ENCODE measurements at regions of chr12 and their contacts with region 1.

Region 1: DNA sequence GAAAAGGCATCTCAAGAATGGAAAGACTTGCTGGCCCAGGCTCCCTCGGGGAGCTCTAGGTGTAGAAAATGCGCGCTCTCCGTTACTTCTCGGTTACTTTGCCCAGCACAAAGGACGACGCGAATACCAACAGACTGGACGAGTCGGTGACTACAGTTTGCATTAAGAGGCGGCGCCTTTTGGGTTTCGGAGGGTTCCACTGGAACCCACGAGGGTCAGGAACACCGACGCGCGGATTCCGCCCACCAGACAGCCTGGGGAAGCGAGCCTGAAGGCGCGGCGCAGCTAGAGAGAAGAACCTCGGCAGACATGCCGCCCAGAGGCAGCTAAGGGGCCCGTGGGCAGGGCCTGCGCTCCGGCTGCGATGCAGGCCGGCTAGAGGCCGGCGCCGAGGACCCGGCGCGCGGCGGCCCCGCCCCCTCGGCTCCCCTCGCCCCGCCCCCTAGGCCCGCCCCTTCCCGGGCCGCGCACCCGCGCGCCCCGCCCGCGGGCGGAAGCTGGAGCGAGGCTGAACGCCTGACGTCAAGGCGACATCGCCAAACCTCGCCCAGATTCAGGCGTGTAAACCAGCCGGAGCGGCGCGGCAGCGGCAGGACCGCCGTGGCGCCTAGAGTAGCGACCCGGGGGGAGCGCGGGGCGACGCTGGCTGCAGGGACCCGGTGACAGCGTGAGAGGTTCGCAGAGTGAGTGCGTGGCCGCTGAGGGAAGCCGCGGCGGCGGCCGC is at the start of gene RAP1B:
- DNase-seq: peak; percentile 87
- H3K4me3 ChIP-seq: peak within 1 kb of the TSS; percentile 90 to 97 (median 96)
- H3K27ac ChIP-seq: peak within 1 kb of the TSS; percentile 90
- H3K4me1 ChIP-seq: peaks cover 35% of the 10 kb centered on the region
- H3K27me3 ChIP-seq: no peaks in the 10 kb centered on the region
- CTCF ChIP-seq: no peak
- POLR2A ChIP-seq: peak; percentile 95
- total RNA-seq, gene RAP1B: 174 and 186 TPM in 2 replicates

Region 2: DNA sequence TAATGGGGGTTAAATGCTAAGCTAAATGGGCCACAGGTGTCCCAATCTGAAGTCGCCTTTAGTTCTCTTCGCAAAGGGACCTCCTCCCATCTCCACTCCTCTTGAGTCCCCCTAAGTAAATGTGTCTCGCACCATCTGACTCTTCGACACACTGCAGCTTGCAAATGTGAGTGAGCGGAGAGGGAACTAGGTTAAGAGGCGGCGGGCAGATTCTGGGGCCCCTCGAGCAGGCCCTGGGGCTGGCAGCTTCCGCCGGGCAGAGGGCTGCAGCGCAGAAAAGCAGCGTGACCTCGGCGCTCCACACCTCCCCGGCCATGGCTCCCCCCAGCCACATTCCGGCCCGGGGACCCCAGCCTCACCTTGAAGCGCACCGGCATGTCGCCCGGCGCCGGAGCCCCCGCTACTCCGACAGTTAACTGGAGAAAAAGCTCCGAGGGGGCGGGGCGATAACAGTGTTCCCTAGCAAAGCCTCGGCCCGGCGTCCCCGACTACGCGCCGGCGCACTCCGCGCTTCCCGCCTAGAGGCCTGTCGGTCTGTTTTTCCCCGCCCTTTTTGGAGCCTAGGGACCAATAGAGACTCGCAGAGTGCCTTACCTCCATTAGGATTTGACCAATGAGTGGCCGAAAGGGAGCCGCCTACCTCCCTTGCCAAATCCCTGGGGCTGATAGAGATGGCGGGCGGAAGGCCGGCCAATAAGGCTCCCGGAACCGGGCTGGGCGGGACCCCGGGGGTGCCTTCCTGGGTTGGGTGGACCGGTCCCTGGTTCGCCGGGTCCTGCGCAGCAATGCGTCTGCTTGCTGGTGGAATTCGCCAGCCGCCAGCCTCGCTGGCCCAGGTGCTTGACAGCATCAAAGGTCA is 278.4 kb before region 1 on chr12 and contains the start of gene MDM1:
- CTCF ChIA-PET with region 1: no interaction called
- POLR2A ChIA-PET with region 1: no interaction called
- dilution Hi-C with region 1: no loop called
- intact Hi-C with region 1: loop called (anchors 1 kb)
- DNase-seq: peak; percentile 98
- H3K4me3 ChIP-seq: peak within 1 kb of the TSS; percentile 57 to 93 (median 87)
- H3K27ac ChIP-seq: peak within 1 kb of the TSS; percentile 19
- H3K4me1 ChIP-seq: peaks cover 13% of the 10 kb centered on the region
- H3K27me3 ChIP-seq: peaks cover 4 to 21% of the 10 kb centered on the region in 2 experiments
- CTCF ChIP-seq: no peak
- POLR2A ChIP-seq: peak; percentile 79
- total RNA-seq, gene MDM1: 12.5 and 14.4 TPM in 2 replicates

Region 3: DNA sequence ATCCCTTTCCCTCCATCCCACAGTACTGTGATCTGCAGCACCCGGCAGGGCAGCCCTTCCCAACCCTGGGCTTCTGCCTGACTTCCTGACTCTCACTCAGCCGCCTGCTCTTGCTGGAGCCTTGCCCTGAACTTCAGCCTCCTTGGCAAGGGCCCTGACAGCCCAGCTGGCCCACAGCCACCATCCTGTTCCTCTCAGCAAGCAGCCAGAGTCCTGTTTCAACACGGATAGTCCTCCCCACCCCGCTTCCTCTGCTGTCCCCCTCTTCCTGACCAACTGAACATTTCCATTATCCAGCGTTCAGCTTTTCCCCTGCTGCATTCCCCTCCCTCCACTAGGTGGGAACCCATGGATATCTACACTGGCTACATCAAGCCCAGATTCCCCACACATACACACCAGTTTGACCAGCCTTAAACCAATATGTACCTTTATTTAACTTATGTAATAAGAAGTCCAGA is 204.4 kb before region 1 on chr12:
- CTCF ChIA-PET with region 1: interaction called, 9 read pairs
- POLR2A ChIA-PET with region 1: interaction called, 5 read pairs
- dilution Hi-C with region 1: no loop called
- intact Hi-C with region 1: loop called (anchors 1 kb)
- DNase-seq: peak; percentile 96
- H3K4me3 ChIP-seq: no peak overlapping the region
- H3K27ac ChIP-seq: no peak overlapping the region
- H3K4me1 ChIP-seq: peaks cover 21% of the 10 kb centered on the region
- H3K27me3 ChIP-seq: peaks cover 0 to 2% of the 10 kb centered on the region in 2 experiments
- CTCF ChIP-seq: peak; percentile 34 to 66
- POLR2A ChIP-seq: no peak

Region 4: GRCh38 chr12:68538726-68539614 is 71.6 kb before region 1 on chr12:
- CTCF ChIA-PET with region 1: no interaction called
- POLR2A ChIA-PET with region 1: no interaction called
- dilution Hi-C with region 1: no loop called
- intact Hi-C with region 1: loop called (anchors 5 kb)
- DNase-seq: peak; percentile 66
- H3K4me3 ChIP-seq: no peak overlapping the region
- H3K27ac ChIP-seq: no peak overlapping the region
- H3K4me1 ChIP-seq: peaks cover 16% of the 10 kb centered on the region
- H3K27me3 ChIP-seq: no peaks in the 10 kb centered on the region
- CTCF ChIP-seq: no peak
- POLR2A ChIP-seq: no peak

Region 5: GRCh38 chr12:68745904-68746571 is 135.5 kb after region 1 on chr12 and contains the start of gene SLC35E3:
- CTCF ChIA-PET with region 1: no interaction called
- POLR2A ChIA-PET with region 1: no interaction called
- dilution Hi-C with region 1: no loop called
- intact Hi-C with region 1: loop called (anchors 5 kb)
- DNase-seq: peak; percentile 85
- H3K4me3 ChIP-seq: peak within 1 kb of the TSS; percentile 7 to 87 (median 64)
- H3K27ac ChIP-seq: peak within 1 kb of the TSS; percentile 25
- H3K4me1 ChIP-seq: peaks cover 16% of the 10 kb centered on the region
- H3K27me3 ChIP-seq: no peaks in the 10 kb centered on the region
- CTCF ChIP-seq: no peak
- POLR2A ChIP-seq: peak; percentile 79
- total RNA-seq, gene SLC35E3: 9.9 and 13.8 TPM in 2 replicates

Region 6: DNA sequence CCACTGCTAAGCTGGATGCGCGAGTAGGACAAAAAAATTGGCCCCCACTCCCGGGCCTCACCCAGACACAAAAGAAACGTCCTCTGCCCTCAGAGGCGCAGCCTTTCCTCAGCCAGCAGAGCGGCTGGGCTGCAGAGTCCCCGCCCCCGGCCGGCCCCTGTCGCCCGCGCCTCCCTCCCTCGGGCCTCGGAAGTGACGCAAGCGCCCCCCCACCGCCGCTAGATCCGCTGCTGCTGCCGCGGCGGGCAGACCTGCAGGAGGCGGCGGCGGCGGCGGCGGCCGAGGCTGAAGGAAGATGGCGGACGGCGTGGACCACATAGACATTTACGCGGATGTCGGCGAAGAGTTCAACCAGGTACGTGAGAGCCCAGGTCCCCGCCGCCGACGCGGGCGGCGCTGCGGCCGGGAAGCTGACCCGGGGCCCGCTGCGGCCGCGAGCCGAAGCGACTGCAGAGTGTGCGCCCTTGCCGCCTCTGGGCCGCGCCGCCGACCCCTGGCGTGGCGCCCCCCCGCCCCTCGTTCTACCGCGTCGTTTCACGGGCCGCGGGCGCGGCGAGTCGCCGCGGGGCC is 628.9 kb after region 1 on chr12 and contains the start of gene CPSF6:
- CTCF ChIA-PET with region 1: no interaction called
- POLR2A ChIA-PET with region 1: no interaction called
- dilution Hi-C with region 1: no loop called
- intact Hi-C with region 1: loop called (anchors 10 kb)
- DNase-seq: peak; percentile 95
- H3K4me3 ChIP-seq: peak within 1 kb of the TSS; percentile 60 to 99 (median 99)
- H3K27ac ChIP-seq: peak within 1 kb of the TSS; percentile 89
- H3K4me1 ChIP-seq: peaks cover 17% of the 10 kb centered on the region
- H3K27me3 ChIP-seq: peaks cover 2% of the 10 kb centered on the region in 2 experiments
- CTCF ChIP-seq: no peak
- POLR2A ChIP-seq: peak; percentile 93
- total RNA-seq, gene CPSF6: 86.2 and 91.7 TPM in 2 replicates

Measured in endothelial cell of umbilical vein (primary cell).